Activated CD4-positive, alpha-beta memory T cell treated with anti-CD3 and anti-CD28 coated beads, Interleukin-2, amount 10 ng/mL, durations not matched to agents 7 days and 5 days (primary cell): ENCODE measurements at regions of chr15 and their contacts with region 1.

Region 1: DNA sequence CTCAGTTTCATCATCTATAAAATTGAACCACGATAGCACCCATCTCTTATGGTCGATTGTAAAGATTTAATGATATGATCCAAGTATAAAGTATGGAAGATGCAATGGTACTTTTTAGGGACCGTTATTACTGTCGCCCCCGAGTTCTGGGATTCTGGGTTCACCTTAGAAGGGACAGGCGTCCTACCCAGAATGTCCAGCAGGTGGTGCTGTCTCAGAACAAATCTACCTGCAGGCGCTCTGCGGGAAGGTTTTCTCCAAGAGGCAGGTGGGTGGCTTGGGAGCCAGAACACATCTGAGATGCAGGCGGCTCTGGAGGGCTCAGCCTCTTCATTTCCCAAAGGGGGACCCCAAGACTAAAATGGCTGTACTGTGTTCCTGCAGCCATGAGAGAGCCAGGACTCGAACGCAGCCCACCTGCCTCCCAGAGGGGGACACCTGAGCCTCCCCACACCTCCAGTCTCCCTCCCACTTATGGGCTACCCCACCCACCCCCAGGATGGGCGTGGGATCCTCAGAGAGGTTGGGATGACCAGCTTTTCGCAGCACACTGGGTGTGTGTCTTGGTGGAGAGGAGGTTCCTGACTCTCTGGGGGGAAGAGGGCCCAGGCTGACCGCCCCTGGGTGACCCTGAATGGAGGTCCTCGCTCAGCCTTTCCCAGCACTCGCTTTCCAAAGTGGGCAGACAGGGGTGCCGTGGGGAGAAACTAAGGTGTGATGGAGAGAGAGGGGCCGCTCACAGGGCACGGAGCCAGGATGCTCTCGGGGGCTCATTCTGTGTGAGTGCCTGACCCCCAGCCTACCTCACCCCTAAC is 28.1 kb upstream of the CORO2B start:
- DNase-seq: peak; percentile 75
- H3K4me3 Mint-ChIP-seq: no peak overlapping the region
- H3K27ac Mint-ChIP-seq: no peak overlapping the region
- H3K4me1 Mint-ChIP-seq: peaks cover 8% of the 10 kb centered on the region
- H3K27me3 Mint-ChIP-seq: peaks cover 47% of the 10 kb centered on the region

Region 2: DNA sequence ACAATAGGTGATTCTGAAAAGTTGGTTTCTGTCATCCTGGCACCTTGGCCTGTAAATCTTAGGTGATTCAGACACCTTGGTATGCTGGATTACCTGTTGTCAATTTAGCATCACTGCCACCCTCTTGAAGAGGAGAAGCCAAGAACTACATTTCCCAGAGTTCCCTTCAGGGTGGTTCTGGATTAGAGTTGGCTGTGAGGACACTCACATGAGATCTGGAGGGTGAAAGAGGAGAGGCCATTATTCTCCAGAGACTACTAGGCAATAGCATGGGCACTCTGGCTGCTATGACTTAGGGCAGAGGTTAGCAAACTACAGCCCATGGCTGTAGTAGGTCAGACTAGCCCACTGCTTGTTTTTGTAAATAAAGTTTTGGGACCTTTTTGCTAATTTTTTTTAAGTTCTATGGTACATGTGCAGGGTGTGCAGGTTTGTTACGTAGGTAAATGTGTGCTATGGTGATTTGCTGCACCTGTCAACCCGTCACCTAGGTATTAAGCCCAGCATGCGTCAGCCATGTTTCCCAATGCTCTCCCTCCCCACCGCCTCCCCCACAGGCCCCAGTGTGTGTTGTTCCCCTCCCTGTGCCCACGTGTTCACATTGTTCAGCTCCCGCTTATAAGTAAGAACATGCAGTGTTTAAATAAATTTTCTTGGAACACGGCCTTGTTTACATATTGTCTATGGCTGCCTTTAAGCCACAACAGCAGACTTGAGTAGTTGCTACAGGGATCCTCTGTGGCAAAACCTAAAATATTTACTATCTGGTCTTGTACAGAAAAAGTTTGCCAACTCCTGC is 13.4 kb before region 1 on chr15:
- CTCF ChIA-PET with region 1: interaction called, 18 read pairs
- POLR2A ChIA-PET with region 1: no interaction called
- DNase-seq: no peak
- H3K4me3 Mint-ChIP-seq: no peak overlapping the region
- H3K27ac Mint-ChIP-seq: no peak overlapping the region
- H3K4me1 Mint-ChIP-seq: no peaks in the 10 kb centered on the region
- H3K27me3 Mint-ChIP-seq: peaks cover 42% of the 10 kb centered on the region